Gastrocnemius medialis (tissue), 4 donors: ENCODE measurements at regions of chr7 and their contacts with region 1.

Region 1: GRCh38 chr7:33895025-33895804 is 10.1 kb upstream of the BMPER start:
- DNase-seq: peak; percentile 68 to 78
- ATAC-seq: peak; percentile 80 to 93
- H3K4me3 ChIP-seq: peak overlapping the region in 1 of 4 donors; percentile 30
- H3K27ac ChIP-seq: no peak overlapping the region
- H3K4me1 ChIP-seq: peaks cover 0 to 3% of the 10 kb centered on the region in 2 donors
- H3K27me3 ChIP-seq: no peaks in the 10 kb centered on the region
- CTCF ChIP-seq: peak; percentile 59 to 95 (median 85)
- POLR2A ChIP-seq: no peak

Region 2: DNA sequence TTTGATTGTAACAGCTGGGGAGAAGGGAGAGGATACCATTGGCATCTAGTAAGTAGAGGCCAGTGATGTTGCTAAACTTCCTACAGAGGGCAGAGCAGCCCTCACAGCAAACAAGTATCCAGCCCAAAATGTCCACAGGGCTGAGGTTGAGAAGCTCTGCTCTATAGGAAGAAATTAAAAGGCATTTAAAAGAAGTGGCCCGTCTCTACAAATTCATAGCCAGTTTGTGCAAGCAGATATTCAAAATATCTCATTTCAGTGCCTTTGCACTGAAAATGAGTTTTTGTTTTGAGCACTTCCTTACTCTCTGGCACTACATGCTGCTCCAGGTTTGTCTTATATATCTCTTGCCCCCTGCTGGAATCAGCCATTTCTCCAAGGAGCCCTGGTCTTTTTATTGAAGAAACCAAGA is 435.9 kb before region 1 on chr7:
- in situ Hi-C with region 1: no loop called
- intact Hi-C with region 1: loop called (anchors 5 kb)
- DNase-seq: peak in 1 of 2 donors; percentile 11
- ATAC-seq: peak; percentile 58 to 75
- H3K4me3 ChIP-seq: no peak overlapping the region
- H3K27ac ChIP-seq: no peak overlapping the region
- H3K4me1 ChIP-seq: no peaks in the 10 kb centered on the region
- H3K27me3 ChIP-seq: no peaks in the 10 kb centered on the region
- CTCF ChIP-seq: peak in 3 of 5 experiments; percentile 37 to 57 (median 40)
- POLR2A ChIP-seq: no peak

Region 3: DNA sequence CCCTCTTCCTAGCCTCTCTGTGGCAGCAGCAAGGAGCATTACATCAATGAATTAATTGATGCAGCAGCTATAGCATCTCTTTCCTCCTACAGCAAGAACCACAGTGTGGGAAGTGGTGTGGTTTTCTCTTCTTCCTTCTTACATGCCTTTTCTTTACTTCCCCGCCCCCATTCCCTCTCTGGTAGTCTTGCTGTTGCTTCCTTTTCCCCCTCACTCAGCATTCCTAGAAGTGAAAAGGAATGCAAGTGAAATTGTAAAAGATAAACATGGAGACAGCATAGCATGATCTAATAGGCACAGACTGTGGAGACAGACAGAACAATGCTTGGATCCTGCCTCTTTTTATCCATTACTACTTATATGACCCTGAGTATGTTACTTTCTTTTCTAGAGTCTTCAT is 360.4 kb before region 1 on chr7:
- in situ Hi-C with region 1: no loop called
- intact Hi-C with region 1: no loop called
- DNase-seq: no peak
- ATAC-seq: no peak
- H3K4me3 ChIP-seq: no peak overlapping the region
- H3K27ac ChIP-seq: no peak overlapping the region
- H3K4me1 ChIP-seq: peaks cover 10 to 33% of the 10 kb centered on the region in 2 donors
- H3K27me3 ChIP-seq: no peaks in the 10 kb centered on the region
- CTCF ChIP-seq: no peak
- POLR2A ChIP-seq: no peak

Region 4: DNA sequence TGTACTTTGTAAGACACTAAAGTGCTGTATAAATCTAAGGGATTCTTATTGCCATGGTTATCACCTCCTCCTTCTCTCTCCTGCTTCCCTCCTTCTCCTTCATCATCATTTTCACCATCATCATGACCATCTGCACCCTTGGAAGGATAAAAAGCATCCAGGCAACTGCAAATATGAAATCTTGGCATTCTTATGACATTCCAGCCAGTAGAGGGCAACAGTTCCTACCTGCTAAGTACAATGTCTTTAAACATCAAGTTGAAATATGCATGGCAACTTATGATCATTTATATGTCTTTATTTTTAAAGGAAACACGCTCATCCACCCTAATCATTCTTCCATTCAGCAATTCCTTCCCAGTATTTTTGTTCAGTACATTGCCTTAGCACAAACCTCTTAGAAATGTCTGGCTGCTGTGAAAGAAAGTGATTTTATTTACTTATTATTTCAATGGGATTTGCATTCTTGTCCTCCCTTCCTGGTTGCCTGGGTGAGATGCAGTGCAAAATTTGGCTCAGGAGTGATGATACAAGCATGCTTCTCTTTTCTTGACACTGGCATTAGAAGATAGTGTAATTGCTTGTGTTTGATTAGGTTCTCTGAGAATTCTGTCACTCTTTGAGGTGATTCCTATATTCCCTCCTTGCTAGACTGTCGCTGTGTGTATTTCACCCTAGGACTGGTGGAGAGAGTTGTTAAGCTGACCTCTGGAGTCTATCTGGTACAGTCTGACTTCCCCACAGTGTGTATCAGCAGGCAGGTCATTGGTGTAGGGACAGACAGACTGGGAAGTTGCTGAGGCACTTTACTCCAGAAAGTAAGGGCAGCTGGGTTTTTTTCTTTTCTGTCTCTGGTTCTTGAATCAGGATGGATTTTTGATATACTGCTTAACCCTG is 178.4 kb before region 1 on chr7:
- in situ Hi-C with region 1: no loop called
- intact Hi-C with region 1: loop called (anchors 5 kb)
- DNase-seq: no peak
- ATAC-seq: no peak
- H3K4me3 ChIP-seq: no peak overlapping the region
- H3K27ac ChIP-seq: no peak overlapping the region
- H3K4me1 ChIP-seq: peaks cover 5 to 20% of the 10 kb centered on the region in 2 donors
- H3K27me3 ChIP-seq: no peaks in the 10 kb centered on the region
- CTCF ChIP-seq: peak; percentile 55 to 69 (median 62)
- POLR2A ChIP-seq: no peak

Region 5: GRCh38 chr7:33757562-33758165 is 137.6 kb before region 1 on chr7:
- in situ Hi-C with region 1: loop called (anchors 5 to 10 kb)
- intact Hi-C with region 1: loop called (anchors 1 kb)
- DNase-seq: no peak
- ATAC-seq: peak in 1 of 2 donors; percentile 22
- H3K4me3 ChIP-seq: no peak overlapping the region
- H3K27ac ChIP-seq: no peak overlapping the region
- H3K4me1 ChIP-seq: peaks cover 9 to 17% of the 10 kb centered on the region in 2 donors
- H3K27me3 ChIP-seq: no peaks in the 10 kb centered on the region
- CTCF ChIP-seq: peak; percentile 45 to 74 (median 70)
- POLR2A ChIP-seq: no peak

Region 6: DNA sequence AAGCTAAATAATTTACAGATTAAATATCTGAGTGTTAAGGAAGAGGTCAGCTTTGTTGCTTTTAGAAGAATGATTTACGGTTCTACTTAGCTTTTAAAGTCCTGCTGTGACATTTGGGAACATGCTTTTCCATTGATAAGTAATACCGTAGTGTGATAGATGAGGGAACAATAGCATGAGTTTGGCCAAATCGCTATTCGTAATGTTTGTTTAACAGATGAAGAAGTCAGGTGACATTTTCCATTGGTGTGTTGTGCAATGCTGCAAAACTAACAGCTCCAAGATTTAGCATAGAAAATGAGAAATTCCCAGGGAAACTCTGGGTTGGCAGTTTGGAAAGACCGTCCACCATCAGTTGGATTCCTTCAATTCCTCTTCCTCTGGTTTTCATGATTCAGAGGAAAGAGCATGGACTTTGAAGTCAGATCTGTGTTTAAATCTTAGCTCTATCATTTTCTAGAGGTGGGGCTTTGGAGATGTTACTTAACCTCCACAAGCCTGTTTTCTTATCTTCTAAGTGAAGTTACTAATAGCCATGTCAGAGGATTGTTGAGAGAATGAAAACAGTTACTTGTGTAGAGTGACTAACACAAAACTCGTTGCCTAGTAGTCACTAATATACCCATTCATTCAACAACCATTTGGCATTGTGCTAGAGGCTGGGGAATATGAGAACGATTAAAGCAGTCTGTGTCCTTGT is 130.3 kb before region 1 on chr7:
- in situ Hi-C with region 1: loop called in 2 of 4 experiments (anchors 10 kb)
- intact Hi-C with region 1: no loop called
- DNase-seq: no peak
- ATAC-seq: no peak
- H3K4me3 ChIP-seq: no peak overlapping the region
- H3K27ac ChIP-seq: no peak overlapping the region
- H3K4me1 ChIP-seq: peaks cover 0 to 7% of the 10 kb centered on the region in 2 donors
- H3K27me3 ChIP-seq: no peaks in the 10 kb centered on the region
- CTCF ChIP-seq: no peak
- POLR2A ChIP-seq: no peak

Region 7: DNA sequence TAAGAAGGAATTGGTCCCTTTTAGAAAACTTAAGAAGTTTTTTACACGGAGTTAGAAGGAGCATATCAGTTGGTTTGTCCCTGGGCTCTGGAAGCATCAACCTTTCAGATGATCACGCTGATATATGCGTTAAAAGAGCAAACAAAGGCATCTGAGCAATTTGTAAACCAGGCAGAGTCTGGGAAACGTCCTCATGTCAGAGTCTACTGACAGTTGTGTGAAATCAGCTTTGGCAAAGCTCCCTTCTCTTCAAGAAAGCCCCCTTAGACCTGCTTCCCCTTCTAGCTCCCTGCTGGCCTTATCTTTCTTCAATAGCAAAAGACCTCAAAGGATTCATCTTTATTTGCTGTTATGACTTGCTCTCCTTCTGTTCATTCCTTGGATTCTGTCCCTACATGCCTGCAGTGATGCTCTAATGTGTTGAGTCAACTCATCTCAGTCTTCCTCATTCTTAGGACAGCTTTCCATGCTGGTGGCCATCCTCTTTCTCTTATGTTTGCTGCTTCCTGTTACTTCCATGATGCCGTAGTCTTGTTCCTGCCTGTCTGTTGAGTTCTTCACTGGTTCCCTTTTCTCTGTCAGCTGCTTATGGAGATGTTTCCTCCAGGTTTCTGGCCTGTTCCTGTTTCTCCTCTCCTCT is 96.4 kb before region 1 on chr7:
- in situ Hi-C with region 1: no loop called
- intact Hi-C with region 1: no loop called
- DNase-seq: no peak
- ATAC-seq: no peak
- H3K4me3 ChIP-seq: no peak overlapping the region
- H3K27ac ChIP-seq: no peak overlapping the region
- H3K4me1 ChIP-seq: no peaks in the 10 kb centered on the region
- H3K27me3 ChIP-seq: no peaks in the 10 kb centered on the region
- CTCF ChIP-seq: no peak
- POLR2A ChIP-seq: no peak

Region 8: GRCh38 chr7:34036051-34036945 is 141.1 kb after region 1 on chr7:
- in situ Hi-C with region 1: no loop called
- intact Hi-C with region 1: no loop called
- DNase-seq: no peak
- ATAC-seq: no peak
- H3K4me3 ChIP-seq: no peak overlapping the region
- H3K27ac ChIP-seq: no peak overlapping the region
- H3K4me1 ChIP-seq: no peaks in the 10 kb centered on the region
- H3K27me3 ChIP-seq: no peaks in the 10 kb centered on the region
- CTCF ChIP-seq: no peak
- POLR2A ChIP-seq: no peak